Dendritic cell treated with granulocyte-macrophage colony-stimulating factor and Interleukin-4, amounts not matched to agents 40 ng/mL and 50 ng/mL, for 4 days (primary cell): ENCODE measurements at regions of chr6 and their contacts with region 1.

Region 1: DNA sequence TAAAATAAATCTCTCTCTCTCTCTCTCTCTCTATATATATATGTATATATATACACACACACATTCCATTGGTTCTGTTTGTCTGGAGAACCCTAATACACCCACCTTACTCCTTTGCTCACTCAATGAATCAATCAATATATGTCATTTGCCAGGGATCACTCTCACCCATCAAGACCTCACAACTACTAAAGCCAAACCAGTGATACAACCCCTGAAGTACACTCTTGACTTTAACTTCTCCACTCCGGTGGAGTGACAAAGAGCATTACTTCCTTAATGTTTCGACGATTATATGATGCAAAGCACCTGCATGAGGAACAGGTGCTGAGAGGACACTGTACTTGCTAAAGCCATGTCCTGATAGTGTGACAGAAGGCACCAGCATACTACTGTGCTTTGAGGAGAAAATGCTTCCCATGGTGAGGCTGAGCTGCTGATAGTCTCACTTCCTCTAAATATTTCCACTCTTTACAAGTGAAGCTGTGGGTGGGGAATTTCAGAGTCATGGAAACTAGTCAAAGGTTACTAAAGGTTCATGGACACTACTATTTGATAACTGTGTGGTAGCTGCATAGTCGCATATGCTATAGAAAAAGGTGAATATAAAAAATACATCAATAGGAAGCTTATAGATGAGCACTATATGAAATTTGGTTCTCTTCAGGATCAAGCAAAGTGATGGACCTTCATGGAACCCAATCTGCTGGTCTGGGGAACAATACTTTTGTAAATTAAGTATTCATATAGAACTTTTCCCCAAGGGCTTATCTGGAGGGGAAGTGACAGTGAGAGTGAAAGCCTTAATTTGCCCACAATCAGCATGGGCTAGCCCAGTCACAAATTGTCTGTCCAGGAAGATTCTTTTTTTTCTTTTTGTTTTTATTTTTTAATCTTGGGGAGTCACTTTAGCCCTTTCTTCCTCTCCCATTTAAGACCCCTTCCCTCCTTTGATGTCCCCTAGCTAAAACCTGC is 141.9 kb upstream of the NEDD9 start:
- H3K4me3 Mint-ChIP-seq: no peak overlapping the region
- H3K27ac Mint-ChIP-seq: peak overlapping the region; percentile 28
- H3K4me1 Mint-ChIP-seq: peaks cover 67% of the 10 kb centered on the region
- H3K27me3 Mint-ChIP-seq: peaks cover 37% of the 10 kb centered on the region

Region 2: DNA sequence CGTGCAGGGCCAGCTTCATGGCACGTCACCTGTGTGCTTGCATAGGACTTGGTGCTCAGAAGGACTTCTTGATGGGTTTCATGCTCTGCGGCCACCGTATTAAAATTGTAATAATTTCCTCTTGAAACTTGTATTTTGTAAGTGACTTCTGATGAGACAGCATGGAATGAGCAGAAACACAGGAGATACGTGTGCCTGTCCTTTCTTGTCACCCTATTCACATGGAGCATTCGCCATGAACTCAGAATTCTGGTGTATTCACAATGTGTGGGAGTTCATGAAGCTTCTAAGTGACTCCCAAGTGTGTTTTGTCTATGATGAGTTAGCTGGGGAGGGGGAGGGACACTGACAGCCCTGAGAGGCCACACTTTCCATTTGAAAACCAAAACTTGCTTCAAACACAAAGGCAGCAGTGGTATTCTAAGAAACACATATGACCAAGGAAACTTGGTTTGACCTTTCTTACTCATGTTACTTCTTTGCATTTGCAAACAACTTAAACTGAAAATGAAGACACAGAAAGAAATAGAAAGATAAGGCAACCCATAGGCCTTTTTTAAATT is 49.8 kb before region 1 on chr6:
- intact Hi-C with region 1: loop called (anchors 10 kb)
- H3K4me3 Mint-ChIP-seq: no peak overlapping the region
- H3K27ac Mint-ChIP-seq: peak overlapping the region; percentile 23
- H3K4me1 Mint-ChIP-seq: peaks cover 42% of the 10 kb centered on the region
- H3K27me3 Mint-ChIP-seq: peaks cover 5% of the 10 kb centered on the region

Region 3: GRCh38 chr6:11404838-11405237 is 30.5 kb after region 1 on chr6:
- intact Hi-C with region 1: loop called (anchors 5 kb)
- H3K4me3 Mint-ChIP-seq: no peak overlapping the region
- H3K27ac Mint-ChIP-seq: peak overlapping the region; percentile 66
- H3K4me1 Mint-ChIP-seq: peaks cover 41% of the 10 kb centered on the region
- H3K27me3 Mint-ChIP-seq: peaks cover 24% of the 10 kb centered on the region